ENCODE measurements at regions of chr14 and their contacts with region 1.

Region 1: DNA sequence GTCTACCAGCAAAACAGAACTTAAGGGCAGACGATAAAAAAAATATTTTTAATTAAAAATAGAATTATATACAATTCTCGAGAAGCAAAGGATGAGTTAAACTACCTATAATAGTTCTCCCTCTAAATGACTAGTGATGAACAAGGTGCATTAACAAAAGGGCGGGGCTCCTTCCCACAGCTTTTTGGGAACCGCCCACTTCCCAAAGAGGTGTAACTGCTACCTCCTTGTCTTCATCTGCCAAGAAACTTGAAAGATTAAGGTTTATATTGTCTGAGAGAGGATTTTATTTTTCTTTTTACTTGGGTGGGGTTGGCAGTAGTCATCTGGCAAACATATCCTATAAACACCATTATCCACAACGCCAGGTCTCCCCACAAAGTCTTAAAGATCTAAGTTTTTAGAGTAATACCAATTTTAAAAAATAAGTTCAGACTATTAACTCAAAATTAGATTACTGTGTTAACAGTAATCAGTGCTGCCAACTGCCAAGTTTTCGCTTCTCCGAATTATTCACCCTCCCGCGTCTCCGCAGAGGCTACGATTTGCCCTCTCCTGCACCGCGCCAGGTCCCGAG is 931 bp downstream of the RALGAPA1 start:
- DNase-seq: peak; percentile 48
- H3K4me3 Mint-ChIP-seq: peak overlapping the region; percentile 99
- H3K27ac Mint-ChIP-seq: peak overlapping the region; percentile 91
- H3K4me1 Mint-ChIP-seq: peaks cover 20% of the 10 kb centered on the region
- H3K27me3 Mint-ChIP-seq: no peaks in the 10 kb centered on the region

Region 2: DNA sequence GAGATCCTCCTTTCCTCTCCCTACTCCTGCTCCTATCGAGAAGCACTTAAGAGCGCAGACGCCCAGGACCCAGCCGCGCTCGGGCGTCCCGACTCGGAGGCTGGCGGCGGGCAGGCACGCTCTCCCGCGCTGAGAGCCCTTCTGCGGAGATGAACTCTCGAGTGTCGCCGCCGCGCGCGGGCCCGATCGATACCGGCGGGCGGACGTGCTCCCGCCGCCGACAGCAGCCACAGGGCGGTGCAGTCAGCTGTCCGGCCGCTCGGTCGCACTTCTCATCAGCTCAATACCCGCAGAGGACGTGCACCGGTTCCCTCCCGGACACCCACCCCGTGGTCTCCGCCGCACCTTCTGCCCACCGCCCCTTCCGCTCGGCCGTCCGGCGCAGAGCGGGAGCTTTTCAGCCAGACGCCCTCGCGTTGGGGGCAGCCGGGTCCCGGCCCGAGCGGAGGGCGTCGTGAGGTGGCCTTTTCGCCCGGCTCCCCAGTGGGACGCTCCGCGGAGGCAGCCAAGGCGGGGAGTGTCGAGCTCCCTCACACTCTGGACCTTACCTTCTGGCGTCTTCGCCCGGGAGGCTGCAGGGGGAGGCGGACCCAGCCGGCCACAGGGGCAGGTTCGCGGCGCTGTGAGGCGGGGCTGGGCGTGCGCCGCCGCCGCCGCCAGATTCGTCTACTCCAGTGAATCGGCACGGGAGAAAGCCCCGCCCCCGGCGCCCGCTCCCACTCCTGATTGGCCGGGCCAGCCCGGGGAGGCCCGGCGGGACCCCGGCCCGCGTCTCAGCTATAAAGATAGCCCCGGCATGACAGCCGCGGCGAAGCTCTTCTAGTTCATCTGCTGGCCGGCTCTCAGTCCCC is 274.6 kb before region 1 on chr14 and contains the start of gene INSM2:
- CTCF ChIA-PET with region 1: no interaction called
- POLR2A ChIA-PET with region 1: no interaction called
- intact Hi-C with region 1: loop called (anchors 2 kb)
- DNase-seq: peak; percentile 71
- H3K4me3 Mint-ChIP-seq: peak within 1 kb of the TSS; percentile 65
- H3K27ac Mint-ChIP-seq: no peak within 1 kb of the TSS
- H3K4me1 Mint-ChIP-seq: peaks cover 11% of the 10 kb centered on the region
- H3K27me3 Mint-ChIP-seq: peaks cover 35% of the 10 kb centered on the region
- total RNA-seq, gene INSM2: not detected

Region 3: DNA sequence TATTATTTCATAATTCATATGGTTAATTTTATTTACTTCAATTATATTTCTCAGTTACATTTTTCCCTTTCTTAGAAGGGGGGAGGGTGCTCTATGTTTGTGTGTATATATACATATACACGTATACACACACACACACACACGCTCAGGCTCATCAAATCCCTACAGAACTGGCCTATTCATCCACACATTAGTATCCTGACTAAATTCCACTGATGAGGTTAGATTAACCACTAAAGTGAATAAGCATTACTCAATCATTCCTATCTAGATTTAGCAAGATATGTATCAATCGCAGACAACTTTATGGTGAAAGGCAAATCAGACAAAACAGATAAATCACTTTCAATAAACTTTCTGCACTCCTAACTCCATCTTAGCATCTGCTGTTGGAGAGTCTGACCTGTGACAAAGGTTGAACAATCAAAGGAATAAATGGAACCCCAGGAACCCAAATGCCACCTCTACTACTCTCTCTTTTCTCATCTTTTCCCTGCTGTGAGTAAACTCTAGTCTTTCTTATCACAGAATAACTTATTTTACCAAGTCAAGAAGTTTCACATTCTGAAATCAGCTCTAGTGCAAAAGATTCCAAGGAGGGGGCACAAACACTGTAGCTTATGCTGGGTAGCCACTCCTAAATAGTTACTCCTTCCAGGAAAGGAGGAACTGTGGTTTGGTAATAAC is 66.7 kb before region 1 on chr14:
- CTCF ChIA-PET with region 1: no interaction called
- POLR2A ChIA-PET with region 1: no interaction called
- intact Hi-C with region 1: loop called (anchors 2 kb)
- DNase-seq: no peak
- H3K4me3 Mint-ChIP-seq: no peak overlapping the region
- H3K27ac Mint-ChIP-seq: peak overlapping the region; percentile 3
- H3K4me1 Mint-ChIP-seq: peaks cover 12% of the 10 kb centered on the region
- H3K27me3 Mint-ChIP-seq: no peaks in the 10 kb centered on the region

Region 4: GRCh38 chr14:35786856-35787255 is 21.3 kb before region 1 on chr14:
- CTCF ChIA-PET with region 1: interaction called, 4 read pairs
- POLR2A ChIA-PET with region 1: no interaction called
- intact Hi-C with region 1: loop called (anchors 2 kb)
- DNase-seq: no peak
- H3K4me3 Mint-ChIP-seq: no peak overlapping the region
- H3K27ac Mint-ChIP-seq: no peak overlapping the region
- H3K4me1 Mint-ChIP-seq: peaks cover 43% of the 10 kb centered on the region
- H3K27me3 Mint-ChIP-seq: no peaks in the 10 kb centered on the region

Region 5: GRCh38 chr14:35835208-35835982 is 27.2 kb after region 1 on chr14:
- CTCF ChIA-PET with region 1: no interaction called
- POLR2A ChIA-PET with region 1: no interaction called
- intact Hi-C with region 1: no loop called
- DNase-seq: no peak
- H3K4me3 Mint-ChIP-seq: no peak overlapping the region
- H3K27ac Mint-ChIP-seq: no peak overlapping the region
- H3K4me1 Mint-ChIP-seq: peaks cover 3% of the 10 kb centered on the region
- H3K27me3 Mint-ChIP-seq: no peaks in the 10 kb centered on the region

Region 6: GRCh38 chr14:35927727-35928304 is 119.7 kb after region 1 on chr14:
- CTCF ChIA-PET with region 1: no interaction called
- POLR2A ChIA-PET with region 1: no interaction called
- intact Hi-C with region 1: no loop called
- DNase-seq: no peak
- H3K4me3 Mint-ChIP-seq: no peak overlapping the region
- H3K27ac Mint-ChIP-seq: no peak overlapping the region
- H3K4me1 Mint-ChIP-seq: peaks cover 9% of the 10 kb centered on the region
- H3K27me3 Mint-ChIP-seq: no peaks in the 10 kb centered on the region

Region 7: DNA sequence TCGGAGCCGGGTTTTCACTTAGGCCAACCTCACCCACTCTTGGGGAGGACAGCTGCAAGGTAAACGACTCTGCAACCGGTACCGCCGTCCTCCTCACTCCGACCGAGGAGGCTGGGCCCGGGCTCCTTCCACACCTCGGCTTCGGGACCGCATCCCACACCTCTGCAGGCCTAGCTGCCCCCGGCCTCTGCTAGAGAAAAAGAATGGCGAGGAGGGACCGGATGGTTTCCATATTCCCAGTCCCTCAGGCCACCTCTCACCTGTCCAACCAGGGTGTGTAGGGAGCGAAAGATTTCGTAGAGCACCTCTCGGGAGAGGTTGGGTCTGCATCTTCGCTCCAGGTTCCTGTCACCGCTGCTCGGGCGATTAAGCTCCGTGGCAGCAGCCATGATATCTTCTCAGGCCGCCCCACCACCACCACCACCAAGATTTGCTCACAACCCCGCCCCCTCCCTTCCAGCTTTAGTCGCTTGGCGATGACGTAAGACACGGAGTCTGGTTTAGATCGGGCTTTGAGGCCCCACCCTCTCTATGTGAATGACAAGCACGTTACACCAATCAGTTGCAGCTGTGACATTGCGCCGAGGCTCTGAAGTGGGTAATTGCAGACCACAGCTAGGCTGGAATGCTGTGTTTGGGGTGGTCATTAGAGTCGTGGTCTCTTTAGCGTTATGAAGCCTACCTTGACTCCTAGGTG is 512.2 kb after region 1 on chr14 and contains the start of gene MBIP:
- CTCF ChIA-PET with region 1: no interaction called
- POLR2A ChIA-PET with region 1: no interaction called
- intact Hi-C with region 1: loop called (anchors 5 kb)
- DNase-seq: peak; percentile 95
- H3K4me3 Mint-ChIP-seq: peak within 1 kb of the TSS; percentile 89
- H3K27ac Mint-ChIP-seq: peak within 1 kb of the TSS; percentile 89
- H3K4me1 Mint-ChIP-seq: peaks cover 31% of the 10 kb centered on the region
- H3K27me3 Mint-ChIP-seq: peaks cover 9% of the 10 kb centered on the region
- total RNA-seq, gene MBIP: 25.5 to 27.3 TPM